AG04450 (cell line): ENCODE measurements at regions of chr15 and their contacts with region 1.

Region 1: GRCh38 chr15:44728576-44729407 is 7.5 kb upstream of the TRIM69 start:
- DNase-seq: peak; percentile 95
- H3K4me3 ChIP-seq: peak overlapping the region; percentile 83
- H3K27ac ChIP-seq: peak overlapping the region; percentile 95
- H3K27me3 ChIP-seq: no peaks in the 10 kb centered on the region
- CTCF ChIP-seq: no peak

Region 2: DNA sequence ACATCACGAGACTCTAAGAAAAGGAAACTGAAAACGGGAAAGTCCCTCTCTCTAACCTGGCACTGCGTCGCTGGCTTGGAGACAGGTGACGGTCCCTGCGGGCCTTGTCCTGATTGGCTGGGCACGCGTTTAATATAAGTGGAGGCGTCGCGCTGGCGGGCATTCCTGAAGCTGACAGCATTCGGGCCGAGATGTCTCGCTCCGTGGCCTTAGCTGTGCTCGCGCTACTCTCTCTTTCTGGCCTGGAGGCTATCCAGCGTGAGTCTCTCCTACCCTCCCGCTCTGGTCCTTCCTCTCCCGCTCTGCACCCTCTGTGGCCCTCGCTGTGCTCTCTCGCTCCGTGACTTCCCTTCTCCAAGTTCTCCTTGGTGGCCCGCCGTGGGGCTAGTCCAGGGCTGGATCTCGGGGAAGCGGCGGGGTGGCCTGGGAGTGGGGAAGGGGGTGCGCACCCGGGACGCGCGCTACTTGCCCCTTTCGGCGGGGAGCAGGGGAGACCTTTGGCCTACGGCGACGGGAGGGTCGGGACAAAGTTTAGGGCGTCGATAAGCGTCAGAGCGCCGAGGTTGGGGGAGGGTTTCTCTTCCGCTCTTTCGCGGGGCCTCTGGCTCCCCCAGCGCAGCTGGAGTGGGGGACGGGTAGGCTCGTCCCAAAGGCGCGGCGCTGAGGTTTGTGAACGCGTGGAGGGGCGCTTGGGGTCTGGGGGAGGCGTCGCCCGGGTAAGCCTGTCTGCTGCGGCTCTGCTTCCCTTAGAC is 17.3 kb before region 1 on chr15 and contains the start of gene B2M:
- CTCF ChIA-PET with region 1: interaction called, 34 read pairs
- POLR2A ChIA-PET with region 1: interaction called, 67 read pairs
- DNase-seq: peak; percentile 91
- H3K4me3 ChIP-seq: peak within 1 kb of the TSS; percentile 96
- H3K27ac ChIP-seq: peak within 1 kb of the TSS; percentile 93
- H3K27me3 ChIP-seq: no peaks in the 10 kb centered on the region
- CTCF ChIP-seq: no peak
- polyA plus RNA-seq, gene B2M: 5,193 and 5,536 TPM in 2 replicates